ENCODE measurements at regions of chr19 and their contacts with region 1.

Region 1: GRCh38 chr19:37779127-37780005 is at the start of gene ZNF573:
- DNase-seq: peak; percentile 67
- H3K4me3 Mint-ChIP-seq: peak within 1 kb of the TSS; percentile 96
- H3K27ac Mint-ChIP-seq: peak within 1 kb of the TSS; percentile 88
- H3K4me1 Mint-ChIP-seq: peaks cover 11% of the 10 kb centered on the region
- H3K27me3 Mint-ChIP-seq: no peaks in the 10 kb centered on the region
- total RNA-seq, gene ZNF573: 3.1 and 3.6 TPM in 2 replicates

Region 2: GRCh38 chr19:37655689-37656371 is 123.5 kb before region 1 on chr19:
- intact Hi-C with region 1: loop called (anchors 2 kb)
- DNase-seq: peak; percentile 85
- H3K4me3 Mint-ChIP-seq: peak overlapping the region; percentile 83
- H3K27ac Mint-ChIP-seq: peak overlapping the region; percentile 93
- H3K4me1 Mint-ChIP-seq: peaks cover 22% of the 10 kb centered on the region
- H3K27me3 Mint-ChIP-seq: no peaks in the 10 kb centered on the region

Region 3: GRCh38 chr19:37719111-37719926 is 60.0 kb before region 1 on chr19 and contains the start of gene ZNF607:
- intact Hi-C with region 1: loop called (anchors 1 kb)
- DNase-seq: peak; percentile 72
- H3K4me3 Mint-ChIP-seq: peak within 1 kb of the TSS; percentile 87
- H3K27ac Mint-ChIP-seq: peak within 1 kb of the TSS; percentile 71
- H3K4me1 Mint-ChIP-seq: peaks cover 6% of the 10 kb centered on the region
- H3K27me3 Mint-ChIP-seq: no peaks in the 10 kb centered on the region
- total RNA-seq, gene ZNF607: 2.7 and 3.0 TPM in 2 replicates

Region 4: GRCh38 chr19:37914908-37915307 is 135.5 kb after region 1 on chr19:
- intact Hi-C with region 1: no loop called
- DNase-seq: no peak
- H3K4me3 Mint-ChIP-seq: no peak overlapping the region
- H3K27ac Mint-ChIP-seq: no peak overlapping the region
- H3K4me1 Mint-ChIP-seq: peaks cover 6% of the 10 kb centered on the region
- H3K27me3 Mint-ChIP-seq: no peaks in the 10 kb centered on the region